Cardiac septum (tissue), 1 donor: ENCODE measurements at regions of chr1 and their contacts with region 1.

Region 1: GRCh38 chr1:153727463-153728304 is at the start of gene INTS3:
- DNase-seq: peak; percentile 100
- total RNA-seq, gene INTS3: 35.2 TPM

Region 2: DNA sequence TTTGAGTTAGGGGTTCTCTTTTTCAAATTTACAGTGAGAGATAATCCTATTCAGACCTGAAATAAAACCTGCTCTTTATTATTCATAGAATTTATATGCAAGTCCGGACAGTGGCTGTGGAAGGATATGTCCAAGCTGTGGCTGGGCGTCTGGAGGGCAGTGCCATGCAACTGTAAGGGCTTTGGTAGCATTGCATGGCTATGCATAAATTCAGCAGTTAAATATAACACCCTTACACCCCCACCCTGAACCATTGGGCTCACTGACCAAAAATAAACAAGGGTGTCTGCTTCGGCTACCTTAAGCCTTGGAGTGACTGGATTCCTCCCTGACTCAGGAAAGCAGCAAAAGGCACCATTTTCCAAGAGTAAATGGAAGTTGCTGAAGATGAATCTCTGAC is 88.4 kb before region 1 on chr1:
- intact Hi-C with region 1: loop called (anchors 5 kb)
- DNase-seq: no peak

Region 3: GRCh38 chr1:153749408-153750005 is 21.8 kb after region 1 on chr1:
- intact Hi-C with region 1: loop called (anchors 2 kb)
- DNase-seq: peak; percentile 93

Region 4: GRCh38 chr1:153990468-153991150 is 262.9 kb after region 1 on chr1 and contains the start of gene RPS27:
- intact Hi-C with region 1: no loop called
- DNase-seq: peak; percentile 90
- total RNA-seq, gene RPS27: 712 TPM